Endothelial cell of umbilical vein (primary cell): ENCODE measurements at regions of chr1 and their contacts with region 1.

Region 1: DNA sequence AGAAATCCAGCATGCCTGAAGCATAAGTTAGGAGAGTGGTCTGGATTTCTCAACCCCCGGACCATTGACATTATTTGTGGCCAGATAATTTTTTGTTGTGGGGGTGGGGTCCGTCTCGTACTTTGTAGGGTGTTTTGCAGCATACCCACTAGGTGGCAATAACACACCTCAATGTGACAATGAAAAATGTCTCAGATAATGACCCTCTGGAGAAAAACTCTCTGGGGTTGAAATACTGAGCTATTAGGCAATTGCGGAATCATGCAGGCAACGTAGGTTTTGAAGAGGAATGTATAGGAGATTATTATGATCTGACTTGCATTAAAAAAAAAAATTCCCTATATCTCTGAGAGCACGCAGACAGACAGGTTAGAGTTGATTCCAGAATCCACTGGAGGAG is 25.3 kb upstream of the RRP15 start:
- DNase-seq: peak; percentile 8
- H3K4me3 ChIP-seq: no peak overlapping the region
- H3K27ac ChIP-seq: no peak overlapping the region
- H3K4me1 ChIP-seq: no peaks in the 10 kb centered on the region
- H3K27me3 ChIP-seq: peaks cover 1 to 5% of the 10 kb centered on the region in 2 experiments
- CTCF ChIP-seq: peak; percentile 24 to 31
- POLR2A ChIP-seq: no peak

Region 2: DNA sequence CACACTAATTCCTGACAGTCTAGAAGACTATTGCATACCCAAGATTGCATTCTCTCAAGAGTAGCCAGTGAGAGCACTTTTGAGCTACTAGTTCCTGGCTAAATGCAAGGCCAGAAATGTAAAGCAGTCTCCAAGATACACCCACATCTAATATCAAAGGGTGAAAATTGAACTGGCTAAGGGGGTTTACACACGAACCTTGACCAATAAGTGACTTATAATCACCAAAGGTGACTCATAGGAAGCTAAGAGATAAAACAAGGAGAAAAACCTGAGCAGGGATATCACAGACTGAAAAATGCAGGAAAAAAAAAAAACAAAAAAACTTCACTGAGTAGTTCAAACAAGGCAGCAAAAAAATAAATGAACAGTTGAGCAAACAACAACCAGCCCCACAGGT is 146.9 kb before region 1 on chr1:
- CTCF ChIA-PET with region 1: no interaction called
- POLR2A ChIA-PET with region 1: no interaction called
- dilution Hi-C with region 1: no loop called
- intact Hi-C with region 1: no loop called
- DNase-seq: no peak
- H3K4me3 ChIP-seq: no peak overlapping the region
- H3K27ac ChIP-seq: no peak overlapping the region
- H3K4me1 ChIP-seq: no peaks in the 10 kb centered on the region
- H3K27me3 ChIP-seq: no peaks in the 10 kb centered on the region
- CTCF ChIP-seq: no peak
- POLR2A ChIP-seq: no peak

Region 3: GRCh38 chr1:219660666-219661463 is 1401.1 kb after region 1 on chr1:
- CTCF ChIA-PET with region 1: interaction called, 13 read pairs
- POLR2A ChIA-PET with region 1: no interaction called
- dilution Hi-C with region 1: no loop called
- intact Hi-C with region 1: loop called (anchors 1 kb)
- DNase-seq: peak; percentile 84
- H3K4me3 ChIP-seq: peak overlapping the region in 2 of 3 experiments; percentile 24 to 49
- H3K27ac ChIP-seq: no peak overlapping the region
- H3K4me1 ChIP-seq: peaks cover 2% of the 10 kb centered on the region
- H3K27me3 ChIP-seq: peaks cover 0 to 9% of the 10 kb centered on the region in 2 experiments
- CTCF ChIP-seq: peak; percentile 82 to 86
- POLR2A ChIP-seq: no peak